ENCODE measurements at regions of chr12 and their contacts with region 1.

Region 1: GRCh38 chr12:115998119-115998633 is 279.3 kb downstream of the MED13L start:
- DNase-seq: no peak
- H3K4me3 ChIP-seq: no peak overlapping the region
- H3K27ac ChIP-seq: peak overlapping the region; percentile 16 to 23
- H3K4me1 ChIP-seq: peaks cover 0 to 18% (median 17%) of the 10 kb centered on the region in 4 donors
- H3K27me3 ChIP-seq: no peaks in the 10 kb centered on the region
- CTCF ChIP-seq: peak; percentile 67 to 83

Region 2: DNA sequence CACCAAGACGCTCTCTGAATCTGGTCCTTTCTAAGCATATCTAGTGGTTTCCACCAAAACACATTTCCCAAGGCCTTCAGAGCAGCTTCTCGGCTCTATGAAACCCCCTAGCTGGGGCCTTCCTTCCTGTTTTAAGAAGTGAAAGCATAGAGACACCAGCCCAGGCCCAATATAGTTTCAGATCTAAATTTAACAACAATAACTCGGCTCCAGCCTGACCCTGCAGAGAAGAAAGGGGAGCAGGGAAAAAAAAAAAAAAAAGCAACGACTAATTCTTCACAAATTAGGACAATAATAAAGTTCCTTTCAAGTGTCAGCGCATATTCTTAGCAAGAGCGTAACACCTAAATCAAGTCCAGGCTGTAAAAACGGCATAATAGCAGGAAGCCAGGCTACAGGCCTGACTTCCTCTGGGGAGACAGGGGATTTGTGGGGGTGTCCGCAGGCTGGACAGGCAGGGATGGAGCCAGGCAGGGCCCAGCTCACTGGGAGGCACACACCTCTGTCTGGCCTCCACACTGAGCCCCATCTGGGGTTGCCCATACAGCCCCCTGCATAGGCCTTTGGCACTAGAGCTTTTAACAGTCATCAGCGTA is 493.8 kb before region 1 on chr12:
- intact Hi-C with region 1: no loop called
- DNase-seq: no peak
- H3K4me3 ChIP-seq: no peak overlapping the region
- H3K27ac ChIP-seq: no peak overlapping the region
- H3K4me1 ChIP-seq: no peaks in the 10 kb centered on the region
- H3K27me3 ChIP-seq: no peaks in the 10 kb centered on the region
- CTCF ChIP-seq: no peak

Region 3: GRCh38 chr12:115871714-115872113 is 126.5 kb before region 1 on chr12:
- intact Hi-C with region 1: no loop called
- DNase-seq: no peak
- H3K4me3 ChIP-seq: no peak overlapping the region
- H3K27ac ChIP-seq: no peak overlapping the region
- H3K4me1 ChIP-seq: no peaks in the 10 kb centered on the region
- H3K27me3 ChIP-seq: peaks cover 0 to 20% of the 10 kb centered on the region in 2 donors
- CTCF ChIP-seq: peak in 1 of 2 experiments; percentile 15

Region 4: DNA sequence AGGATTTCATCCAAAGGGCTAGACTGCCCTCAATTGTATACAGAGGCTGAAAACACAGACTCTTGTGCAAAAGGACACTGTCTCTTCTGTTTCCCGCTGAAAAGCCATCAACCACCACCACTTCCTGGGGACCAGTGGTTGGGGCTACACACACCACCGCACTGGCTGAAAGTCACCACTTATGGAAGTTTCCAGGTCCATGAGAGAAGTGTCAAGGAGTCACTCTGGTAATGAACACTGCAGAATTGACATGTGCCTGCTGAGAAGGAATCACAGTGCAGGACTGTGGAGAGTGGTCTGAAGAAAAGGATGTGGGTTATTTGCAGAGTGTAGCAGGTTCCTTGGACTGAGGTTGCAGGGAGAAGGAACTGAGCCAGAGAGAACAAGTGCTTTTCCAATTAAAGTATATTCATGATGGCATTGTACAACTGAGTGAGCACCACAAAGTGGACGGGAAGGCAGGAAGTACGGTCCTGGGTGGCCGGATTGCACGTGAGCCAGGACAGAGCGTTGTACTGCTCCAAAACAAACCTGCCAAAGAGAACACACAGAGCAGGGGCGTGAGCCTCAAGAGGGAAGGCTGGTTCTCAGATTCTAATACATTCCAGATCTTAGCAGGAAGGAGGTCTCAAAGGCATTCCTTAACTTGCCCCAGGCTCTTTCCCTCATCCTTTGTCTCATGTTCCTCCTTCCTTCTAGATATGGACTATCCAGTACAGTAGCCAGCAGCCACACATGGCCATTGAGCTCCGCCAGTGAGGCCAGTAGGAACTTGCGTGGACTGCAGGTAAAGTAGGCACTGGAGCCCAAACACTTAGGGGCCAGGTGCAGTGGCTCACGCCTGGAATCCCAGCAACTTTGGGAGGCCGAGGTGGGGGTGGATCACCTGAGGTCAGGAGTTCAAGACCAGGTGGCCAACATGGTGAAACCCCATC is 37.0 kb before region 1 on chr12:
- intact Hi-C with region 1: no loop called
- DNase-seq: no peak
- H3K4me3 ChIP-seq: no peak overlapping the region
- H3K27ac ChIP-seq: no peak overlapping the region
- H3K4me1 ChIP-seq: peaks cover 0 to 12% (median 0%) of the 10 kb centered on the region in 4 donors
- H3K27me3 ChIP-seq: no peaks in the 10 kb centered on the region
- CTCF ChIP-seq: no peak

Region 5: DNA sequence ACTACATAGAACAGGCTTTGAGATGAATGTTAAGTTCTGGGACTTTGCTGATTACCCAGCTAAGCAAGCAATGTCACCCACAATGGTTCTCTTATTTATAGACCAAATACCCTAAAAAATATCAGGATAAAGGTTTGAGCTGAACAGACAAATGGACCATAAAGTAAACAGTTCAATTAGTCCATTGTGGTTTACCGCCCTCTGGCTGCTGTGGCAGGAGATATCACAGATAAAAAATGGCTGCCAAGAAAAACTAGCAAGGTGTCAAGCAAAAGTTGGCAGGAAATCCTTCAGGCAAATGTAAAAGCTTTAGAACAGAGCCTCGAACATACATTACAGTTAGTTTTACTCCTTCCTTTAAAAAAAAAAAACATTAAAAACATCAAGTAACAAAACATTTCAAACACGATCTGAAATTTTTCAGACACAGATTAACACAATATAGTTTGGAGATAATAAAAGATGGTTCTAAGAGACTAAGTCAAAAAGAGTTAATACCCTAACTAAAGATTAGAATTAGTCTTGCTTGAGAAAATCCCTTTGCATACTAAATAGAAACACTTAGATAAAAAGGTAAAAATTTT is 238.1 kb after region 1 on chr12:
- intact Hi-C with region 1: loop called (anchors 5 kb)
- DNase-seq: peak in 1 of 2 donors; percentile 40
- H3K4me3 ChIP-seq: no peak overlapping the region
- H3K27ac ChIP-seq: peak overlapping the region in 1 of 2 donors; percentile 28
- H3K4me1 ChIP-seq: peaks cover 0 to 75% (median 33%) of the 10 kb centered on the region in 4 donors
- H3K27me3 ChIP-seq: no peaks in the 10 kb centered on the region
- CTCF ChIP-seq: peak; percentile 60 to 69

Region 6: DNA sequence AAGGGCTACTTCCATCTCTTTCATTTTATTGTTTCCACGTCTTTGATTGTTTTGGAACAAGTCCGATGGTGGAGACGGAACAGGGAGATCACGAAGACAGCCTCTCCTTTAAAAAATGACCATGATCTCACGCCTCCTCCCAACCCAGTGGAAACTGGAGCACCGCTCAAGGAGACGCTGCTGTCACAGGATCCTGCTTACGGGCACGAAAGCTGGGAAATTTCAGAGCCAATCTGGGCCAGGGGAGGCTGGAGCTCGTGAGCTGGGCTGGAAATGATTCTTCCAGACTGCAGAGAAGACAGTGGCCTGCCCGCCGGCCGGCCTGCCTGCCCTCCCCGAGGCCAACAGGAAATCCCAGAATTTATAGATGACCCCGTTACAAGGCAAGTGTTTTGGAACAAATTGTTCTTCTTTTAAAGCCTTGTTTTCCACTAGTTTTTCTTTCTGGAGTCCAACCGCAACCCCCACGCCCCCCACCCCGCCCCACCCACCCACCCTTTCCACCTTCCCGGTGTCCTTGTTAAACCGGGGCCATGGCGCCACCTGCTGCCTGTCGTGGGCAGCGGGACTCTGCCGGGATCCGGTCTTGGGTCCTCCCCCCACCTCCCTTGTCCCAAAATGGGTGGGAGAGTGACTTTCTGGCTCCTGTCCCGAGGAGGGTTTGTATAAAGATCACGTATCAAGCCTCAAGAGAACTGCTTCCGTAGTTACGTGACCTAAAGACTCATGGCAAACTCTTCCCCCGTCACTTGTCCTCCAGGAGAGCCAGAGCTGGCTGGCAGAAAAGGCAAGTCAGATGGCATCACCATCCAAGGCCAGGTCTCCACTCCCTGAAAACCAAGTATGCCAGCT is 601.3 kb after region 1 on chr12:
- intact Hi-C with region 1: loop called (anchors 5 kb)
- DNase-seq: peak; percentile 88 to 90
- H3K4me3 ChIP-seq: peak overlapping the region; percentile 33 to 47
- H3K27ac ChIP-seq: peak overlapping the region; percentile 80 to 85
- H3K4me1 ChIP-seq: peaks cover 0 to 41% (median 25%) of the 10 kb centered on the region in 4 donors
- H3K27me3 ChIP-seq: no peaks in the 10 kb centered on the region
- CTCF ChIP-seq: peak; percentile 53 to 70

Region 7: GRCh38 chr12:116708826-116709756 is 710.9 kb after region 1 on chr12:
- intact Hi-C with region 1: loop called (anchors 5 kb)
- DNase-seq: peak; percentile 40 to 74
- H3K4me3 ChIP-seq: no peak overlapping the region
- H3K27ac ChIP-seq: no peak overlapping the region
- H3K4me1 ChIP-seq: peaks cover 0 to 13% (median 9%) of the 10 kb centered on the region in 4 donors
- H3K27me3 ChIP-seq: peaks cover 0 to 9% of the 10 kb centered on the region in 2 donors
- CTCF ChIP-seq: peak; percentile 70 to 72